GM10248 (cell line): ENCODE measurements at regions of chr12 and their contacts with region 1.

Region 1: DNA sequence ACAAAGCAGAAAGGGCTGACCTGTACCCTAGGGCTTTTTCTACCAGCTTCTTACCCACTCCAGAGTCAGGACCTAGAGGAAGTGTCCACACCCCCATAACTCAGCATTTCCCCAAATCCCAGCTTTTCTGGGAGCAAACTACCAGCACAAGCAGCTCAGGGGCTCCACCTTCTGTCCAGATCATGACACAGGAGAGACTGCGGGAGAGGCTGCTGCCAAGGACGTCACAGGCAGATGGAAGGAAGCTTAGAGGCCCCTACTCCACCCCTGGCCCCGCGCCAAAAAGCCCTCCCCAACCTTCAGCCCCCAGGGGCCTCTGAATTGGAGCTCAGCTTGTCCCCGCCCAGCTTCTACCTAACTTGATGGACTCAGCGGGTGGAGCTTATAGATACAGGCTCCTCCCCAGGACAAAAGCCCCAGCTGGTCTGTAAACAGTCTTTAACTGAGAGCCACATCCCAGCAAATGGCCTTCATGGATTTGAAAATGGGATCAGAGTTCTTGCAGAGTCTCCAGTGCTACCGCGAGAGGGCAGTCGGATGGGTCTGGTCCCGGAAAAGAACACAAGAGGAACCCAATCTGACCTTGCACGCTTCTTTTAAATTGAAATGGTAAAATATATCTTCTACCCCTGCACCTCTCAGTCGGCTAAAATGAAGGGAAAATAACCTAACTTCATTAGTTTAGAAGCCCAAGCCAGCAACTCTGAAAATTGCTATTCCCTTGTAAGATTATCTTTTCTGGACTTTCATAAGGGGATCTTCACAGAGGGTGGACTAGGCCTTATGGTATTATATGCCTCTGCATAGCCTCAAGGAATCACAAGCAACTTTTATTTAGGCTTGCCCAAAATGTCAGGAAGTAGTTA is 6.8 kb upstream of the BAZ2A start:
- DNase-seq: peak; percentile 90
- CTCF ChIP-seq: peak; percentile 90

Region 2: DNA sequence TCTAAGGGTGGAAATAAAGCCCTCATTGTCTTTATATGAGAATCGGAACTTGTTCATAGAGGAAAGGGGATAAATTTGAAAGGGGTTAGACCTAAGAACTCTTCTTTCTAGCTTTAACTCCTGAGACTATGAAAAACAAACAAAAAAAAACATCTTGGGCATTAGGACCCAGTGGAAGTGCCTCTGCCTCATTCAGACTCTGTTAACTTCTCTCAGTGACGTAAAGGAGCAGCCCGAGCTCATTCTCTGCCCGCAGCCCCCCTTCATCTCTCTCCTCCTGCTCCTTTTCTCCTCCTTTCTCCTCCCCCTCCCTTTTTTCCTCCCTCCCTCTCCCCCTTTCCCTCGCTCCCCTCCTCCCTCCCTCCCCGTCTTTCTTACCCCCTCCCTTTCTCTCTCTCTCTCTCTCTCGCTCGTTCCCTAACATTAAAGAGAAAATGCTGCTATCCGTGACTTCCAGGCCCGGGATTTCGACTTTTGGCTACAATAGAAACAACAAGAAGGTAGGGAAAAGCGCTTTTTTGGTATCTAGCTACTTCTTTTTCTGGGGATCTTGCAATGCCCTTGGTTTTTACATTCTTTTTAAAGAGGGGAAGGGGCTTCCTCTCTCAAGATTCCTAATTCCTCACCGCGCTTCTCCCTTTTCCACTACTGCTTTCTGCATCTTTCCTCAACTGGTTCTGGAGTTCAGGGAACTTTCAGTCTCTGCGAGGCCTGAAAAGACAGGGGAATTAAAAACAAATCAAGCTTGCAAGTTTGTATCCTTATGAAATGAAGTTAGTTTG is 115.1 kb before region 1 on chr12 and contains the start of gene RBMS2:
- CTCF ChIA-PET with region 1: interaction called, 11 read pairs
- POLR2A ChIA-PET with region 1: no interaction called
- DNase-seq: peak; percentile 46
- CTCF ChIP-seq: no peak

Region 3: DNA sequence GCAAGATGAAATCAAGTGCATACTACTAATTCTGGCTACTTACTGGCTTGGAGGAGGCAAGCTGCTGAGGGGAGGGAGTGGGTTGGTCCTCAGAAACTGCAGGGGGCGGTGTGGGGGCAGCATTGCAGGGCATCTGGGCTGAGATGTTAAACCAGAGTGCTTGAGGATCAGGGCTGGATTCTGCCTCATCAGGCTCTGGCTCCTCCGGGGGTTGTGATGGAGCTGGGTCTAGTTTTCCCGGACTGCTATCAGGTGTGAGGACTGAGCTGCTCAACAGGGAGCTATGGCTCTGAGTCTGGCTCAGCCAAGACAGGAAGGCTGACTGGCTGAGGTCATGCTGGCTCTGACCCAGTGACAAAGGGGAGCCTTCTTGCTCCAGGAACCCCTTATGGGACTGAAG is 35.4 kb before region 1 on chr12:
- CTCF ChIA-PET with region 1: interaction called, 28 read pairs
- POLR2A ChIA-PET with region 1: no interaction called
- DNase-seq: peak; percentile 42
- CTCF ChIP-seq: no peak

Region 4: GRCh38 chr12:56670836-56671235 is 33.9 kb after region 1 on chr12:
- CTCF ChIA-PET with region 1: interaction called, 11 read pairs
- POLR2A ChIA-PET with region 1: no interaction called
- DNase-seq: no peak
- CTCF ChIP-seq: no peak

Region 5: DNA sequence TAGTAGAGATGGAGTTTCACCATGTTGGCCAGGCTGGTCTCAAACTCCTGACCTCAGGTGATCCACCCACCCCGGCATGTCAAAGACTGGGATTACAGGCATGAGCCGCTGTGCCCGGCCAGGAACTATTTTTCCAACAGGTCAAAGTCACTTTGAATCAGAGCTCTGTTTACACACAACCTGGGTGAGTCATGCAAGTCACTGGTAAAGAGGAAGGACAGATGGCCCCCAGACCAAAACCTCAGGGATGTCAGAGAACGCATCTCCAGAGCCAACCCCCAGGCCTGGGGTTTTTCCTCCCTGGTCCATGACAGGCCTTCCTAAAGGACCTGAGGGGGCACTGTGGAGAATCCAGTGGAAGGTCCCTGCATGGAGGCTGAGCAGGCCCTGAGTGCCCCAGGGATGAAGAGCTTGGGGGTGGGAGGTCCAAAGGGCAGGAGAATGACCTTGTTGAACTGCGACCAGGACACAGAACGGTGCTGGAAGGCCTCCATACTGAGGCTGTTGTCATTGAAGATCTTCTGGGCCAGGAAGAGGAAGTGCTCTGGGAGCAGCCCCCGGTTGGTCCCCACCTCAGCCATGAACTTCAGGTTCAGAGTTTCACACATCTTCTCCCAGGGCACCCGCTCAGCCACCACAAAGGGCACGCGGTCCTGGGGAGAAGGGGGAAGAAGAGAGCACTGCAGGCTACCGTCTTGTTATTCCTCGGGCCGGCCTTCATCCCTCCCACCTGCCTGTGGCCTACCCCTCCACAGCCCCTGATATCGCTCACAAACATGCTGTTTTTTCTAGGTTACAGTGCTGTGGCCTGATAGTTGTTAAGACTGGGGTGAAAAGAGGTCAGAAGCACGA is 465.2 kb after region 1 on chr12:
- CTCF ChIA-PET with region 1: no interaction called
- POLR2A ChIA-PET with region 1: interaction called, 11 read pairs
- DNase-seq: peak; percentile 4
- CTCF ChIP-seq: no peak